ENCODE measurements at regions of chr1 and their contacts with region 1.

Region 1: DNA sequence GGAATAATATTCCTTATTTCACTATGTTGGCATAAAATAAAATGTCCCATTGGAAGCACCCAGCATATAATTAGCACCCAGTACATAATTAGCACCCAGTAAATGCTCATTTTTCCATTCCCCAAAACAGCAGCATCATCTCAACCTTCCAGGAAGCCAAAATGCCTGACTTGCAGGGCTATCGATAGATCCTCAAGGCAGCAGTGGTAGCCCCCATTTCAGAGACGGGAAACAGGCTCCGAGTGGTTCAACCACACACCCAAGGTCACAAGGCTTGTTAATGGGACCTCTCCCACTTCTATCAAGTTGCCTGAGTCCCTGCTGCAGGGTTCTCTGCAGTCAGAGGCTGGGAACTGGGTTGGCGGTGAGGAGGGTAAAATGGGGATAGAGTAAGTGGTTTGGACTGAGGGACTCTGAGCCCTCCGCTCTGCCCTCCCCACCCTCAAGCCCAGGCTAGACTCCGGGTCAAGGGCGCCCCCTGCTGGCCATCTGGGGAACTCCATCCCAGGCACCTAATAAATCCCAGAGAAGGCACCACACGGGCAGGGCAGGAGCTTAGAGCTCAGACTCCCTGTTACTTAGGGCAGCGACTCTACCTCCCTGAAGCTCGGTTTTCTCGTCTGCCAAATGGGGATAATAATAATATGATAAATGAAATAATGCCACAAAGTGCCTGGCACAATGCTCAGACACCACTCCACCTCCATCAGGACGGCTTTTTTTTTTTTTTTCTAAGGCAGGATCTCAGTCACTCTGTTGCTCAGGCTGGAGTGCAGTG is 21.9 kb upstream of the LAPTM5 start:
- DNase-seq: peak; percentile 84 to 89
- ATAC-seq: peak; percentile 70 to 77 (median 73)
- H3K4me3 ChIP-seq: no peak overlapping the region
- H3K27ac ChIP-seq: no peak overlapping the region
- H3K4me1 ChIP-seq: peaks cover 10% of the 10 kb centered on the region
- H3K27me3 ChIP-seq: no peaks in the 10 kb centered on the region
- CTCF ChIP-seq: peak; percentile 93

Region 2: GRCh38 chr1:30718636-30719405 is 60.7 kb before region 1 on chr1:
- intact Hi-C with region 1: loop called (anchors 1 kb)
- DNase-seq: peak; percentile 77 to 90
- ATAC-seq: peak; percentile 84 to 87 (median 86)
- H3K4me3 ChIP-seq: peak overlapping the region; percentile 55
- H3K27ac ChIP-seq: peak overlapping the region; percentile 92
- H3K4me1 ChIP-seq: peaks cover 3% of the 10 kb centered on the region
- H3K27me3 ChIP-seq: no peaks in the 10 kb centered on the region
- CTCF ChIP-seq: peak; percentile 100